A549 (cell line): ENCODE measurements at regions of chr17 and their contacts with region 1.

Region 1: GRCh38 chr17:28416703-28417311 is 10.8 kb upstream of the SLC46A1 start:
- DNase-seq: peak; percentile 73 to 80
- ATAC-seq: peak; percentile 92 to 99
- H3K4me3 ChIP-seq: no peak overlapping the region
- H3K27ac ChIP-seq: no peak overlapping the region
- H3K4me1 ChIP-seq: no peaks in the 10 kb centered on the region
- CTCF ChIP-seq: peak; percentile 84
- EP300 ChIP-seq: no peak
- POLR2A ChIP-seq: no peak
- RAD21 ChIP-seq: peak; percentile 68

Region 2: GRCh38 chr17:28318759-28319660 is 97.8 kb before region 1 on chr17 and contains the start of gene TMEM97:
- CTCF ChIA-PET with region 1: no interaction called
- POLR2A ChIA-PET with region 1: no interaction called
- DNase-seq: peak; percentile 98
- ATAC-seq: peak; percentile 97 to 99
- H3K4me3 ChIP-seq: peak within 1 kb of the TSS; percentile 73
- H3K27ac ChIP-seq: peak within 1 kb of the TSS; percentile 76 to 88
- H3K4me1 ChIP-seq: peaks cover 45% of the 10 kb centered on the region
- CTCF ChIP-seq: no peak
- EP300 ChIP-seq: no peak
- POLR2A ChIP-seq: peak; percentile 80
- RAD21 ChIP-seq: no peak; a peak in 3 of 5 replicates
- polyA plus RNA-seq, gene TMEM97: 90.9 and 98.7 TPM in 2 replicates

Region 3: DNA sequence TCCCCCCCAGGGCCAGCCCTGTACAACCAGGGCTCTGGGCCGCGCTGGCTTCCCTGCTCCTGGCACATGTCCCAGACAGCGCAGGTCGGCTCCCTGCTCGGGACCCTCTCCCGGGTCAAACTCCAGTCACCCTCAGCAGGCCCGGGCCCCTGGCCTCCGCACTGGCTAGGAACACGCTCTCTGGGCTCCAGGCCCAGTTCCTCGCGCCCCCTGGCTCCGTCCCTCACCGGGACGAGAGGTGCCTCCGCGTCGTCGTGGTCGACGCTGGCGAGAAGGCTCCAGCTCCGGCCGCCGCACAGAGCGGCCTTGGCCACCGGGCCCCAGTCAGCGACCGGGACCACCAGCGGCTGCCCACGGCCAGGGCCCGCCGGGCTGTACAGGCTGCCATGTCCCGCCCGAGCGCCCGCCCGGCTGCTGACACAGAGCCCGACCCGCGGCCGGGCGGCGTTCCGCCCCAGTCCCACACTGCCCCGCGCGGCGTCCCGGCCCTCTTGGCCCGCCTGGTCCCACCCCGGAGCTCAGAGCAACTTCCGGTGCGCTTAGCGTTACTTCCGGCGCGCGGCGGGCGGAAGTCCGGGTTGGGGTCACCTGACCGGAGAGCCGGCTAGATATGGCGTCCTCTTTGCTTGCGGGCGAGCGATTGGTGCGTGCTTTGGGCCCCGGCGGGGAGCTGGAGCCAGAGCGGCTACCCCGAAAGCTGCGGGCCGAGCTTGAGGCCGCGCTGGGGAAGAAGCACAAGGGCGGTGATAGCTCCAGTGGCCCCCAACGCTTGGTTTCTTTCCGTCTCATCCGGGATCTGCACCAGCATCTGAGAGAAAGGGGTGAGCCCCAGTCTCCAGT is 59.5 kb before region 1 on chr17 and contains the start of gene POLDIP2:
- CTCF ChIA-PET with region 1: interaction called, 11 read pairs
- POLR2A ChIA-PET with region 1: no interaction called
- DNase-seq: peak; percentile 93 to 96
- ATAC-seq: peak; percentile 98 to 100
- H3K4me3 ChIP-seq: peak within 1 kb of the TSS; percentile 84
- H3K27ac ChIP-seq: peak within 1 kb of the TSS; percentile 93 to 96
- H3K4me1 ChIP-seq: peaks cover 16% of the 10 kb centered on the region
- CTCF ChIP-seq: no peak
- EP300 ChIP-seq: peak in 1 of 2 experiments; percentile 30; a peak in 1 of 5 replicates
- POLR2A ChIP-seq: peak; percentile 93
- RAD21 ChIP-seq: peak in 1 of 2 experiments; percentile 51; a peak in 3 of 5 replicates
- polyA plus RNA-seq, gene POLDIP2: 132 and 162 TPM in 2 replicates

Region 4: DNA sequence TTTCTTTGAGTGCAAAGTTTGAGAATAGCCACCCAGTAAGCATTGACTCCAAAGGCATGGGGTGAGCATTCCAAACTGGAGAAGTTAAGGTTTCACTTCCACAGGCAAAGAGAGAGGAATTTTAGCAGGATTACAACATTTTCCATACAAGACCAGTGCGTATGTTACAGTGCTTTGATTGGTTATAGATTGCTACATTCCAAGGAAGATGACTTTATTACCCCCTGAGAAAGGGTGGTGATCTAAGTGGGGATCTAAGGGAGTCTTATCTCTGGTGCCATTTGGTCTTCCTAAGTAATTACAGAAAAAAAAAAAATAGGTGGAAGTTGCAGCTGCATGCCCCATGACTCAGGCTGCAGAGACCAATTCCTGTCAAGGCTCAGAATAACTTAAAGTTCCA is 22.1 kb before region 1 on chr17:
- CTCF ChIA-PET with region 1: interaction called, 12 read pairs
- POLR2A ChIA-PET with region 1: no interaction called
- DNase-seq: no peak
- ATAC-seq: no peak
- H3K4me3 ChIP-seq: no peak overlapping the region
- H3K27ac ChIP-seq: no peak overlapping the region
- H3K4me1 ChIP-seq: peaks cover 14% of the 10 kb centered on the region
- CTCF ChIP-seq: no peak
- EP300 ChIP-seq: no peak
- POLR2A ChIP-seq: no peak
- RAD21 ChIP-seq: no peak

Region 5: DNA sequence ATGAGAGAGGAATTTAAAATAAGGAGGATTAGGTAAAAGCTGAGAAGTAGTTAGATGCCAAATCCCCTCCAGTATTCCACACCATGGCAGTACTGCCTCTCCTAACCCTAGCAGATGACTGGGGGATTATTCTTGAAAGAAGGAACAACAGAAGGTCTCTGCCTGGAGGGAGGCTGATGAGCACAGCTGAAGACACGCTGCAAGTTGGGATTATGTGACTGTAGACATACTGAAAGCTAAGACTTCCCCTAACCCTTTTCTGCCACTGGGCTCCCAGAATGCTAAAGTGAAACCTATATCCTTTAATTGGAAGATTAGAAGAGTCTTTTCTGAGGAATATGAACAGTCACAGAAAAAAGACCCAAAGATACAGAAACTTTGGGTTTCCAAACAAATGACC is 16.9 kb after region 1 on chr17:
- CTCF ChIA-PET with region 1: interaction called, 19 read pairs
- POLR2A ChIA-PET with region 1: no interaction called
- DNase-seq: no peak
- ATAC-seq: peak in 1 of 2 experiments; percentile 37; a peak in 1 of 6 replicates
- H3K4me3 ChIP-seq: no peak overlapping the region
- H3K27ac ChIP-seq: no peak overlapping the region
- H3K4me1 ChIP-seq: no peaks in the 10 kb centered on the region
- CTCF ChIP-seq: no peak
- EP300 ChIP-seq: no peak
- POLR2A ChIP-seq: no peak
- RAD21 ChIP-seq: no peak